ENCODE measurements at regions of chr16 and their contacts with region 1.

Region 1: DNA sequence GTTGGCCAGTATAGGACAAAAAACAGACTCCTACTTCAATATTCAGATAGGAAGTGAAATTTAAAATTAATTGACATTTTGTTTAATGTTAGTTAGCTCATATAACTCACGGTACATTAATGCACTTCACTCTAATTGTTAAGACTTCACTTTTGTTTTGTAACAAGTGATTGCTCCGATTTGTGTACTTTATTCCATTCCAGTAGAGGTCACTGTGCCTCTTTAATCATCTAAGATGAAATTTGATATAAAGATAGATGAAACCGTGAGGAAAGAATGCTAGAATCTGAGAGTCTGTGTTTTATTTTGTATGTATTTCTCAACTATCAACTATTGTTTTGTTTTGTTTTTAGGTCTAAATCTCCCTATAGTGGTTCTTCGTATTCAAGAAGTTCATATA is 29.0 kb downstream of the RBBP6 start:
- DNase-seq: peak; percentile 60

Region 2: DNA sequence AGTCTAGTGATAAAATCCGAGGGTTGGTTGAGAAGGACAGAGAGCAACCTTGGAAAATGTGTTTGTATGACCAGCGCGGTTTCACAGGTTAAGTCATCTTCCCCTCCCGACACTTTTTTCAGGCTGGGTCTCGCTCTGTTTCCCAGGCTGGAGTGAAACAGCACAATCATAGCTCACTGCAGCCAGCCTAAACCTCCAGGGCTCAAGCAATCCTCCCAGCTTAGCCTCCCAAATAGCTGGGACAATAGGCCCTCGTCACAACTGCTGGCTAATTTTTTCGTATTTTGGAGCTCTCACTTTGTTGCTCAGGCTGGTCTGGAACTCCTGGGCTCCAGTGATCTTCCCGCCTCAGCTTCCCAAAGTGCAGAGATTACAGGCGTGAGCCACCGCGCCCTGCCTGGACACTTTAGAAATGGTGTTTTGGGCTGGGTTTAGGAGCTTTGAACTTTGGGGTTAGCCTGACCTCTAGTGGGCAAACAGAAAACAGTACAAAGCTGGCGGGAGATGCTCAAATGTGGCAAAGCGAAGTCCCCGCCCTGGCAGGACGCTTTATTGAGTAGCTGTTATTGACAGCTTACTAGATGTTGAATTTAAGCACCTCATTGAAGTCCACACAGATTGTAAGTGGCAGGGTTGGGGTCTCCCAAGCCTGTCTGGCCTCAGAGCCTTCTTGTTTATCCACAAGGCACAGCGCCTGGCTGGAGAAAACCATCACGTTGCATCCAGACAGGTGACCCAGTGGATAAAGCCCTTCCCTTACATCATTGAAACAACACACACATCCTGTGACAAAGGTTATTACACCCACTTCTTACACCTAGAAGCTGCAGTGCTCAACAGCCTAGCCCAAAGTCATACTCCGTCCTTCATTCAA is 63.7 kb before region 1 on chr16:
- in situ Hi-C with region 1: no loop called
- DNase-seq: peak; percentile 85

Region 3: GRCh38 chr16:24626256-24626655 is 57.9 kb after region 1 on chr16:
- in situ Hi-C with region 1: no loop called
- DNase-seq: no peak

Region 4: GRCh38 chr16:24820522-24820921 is 252.1 kb after region 1 on chr16:
- in situ Hi-C with region 1: loop called (anchors 10 kb)
- DNase-seq: no peak